ENCODE measurements at regions of chr3 and their contacts with region 1.

Region 1: DNA sequence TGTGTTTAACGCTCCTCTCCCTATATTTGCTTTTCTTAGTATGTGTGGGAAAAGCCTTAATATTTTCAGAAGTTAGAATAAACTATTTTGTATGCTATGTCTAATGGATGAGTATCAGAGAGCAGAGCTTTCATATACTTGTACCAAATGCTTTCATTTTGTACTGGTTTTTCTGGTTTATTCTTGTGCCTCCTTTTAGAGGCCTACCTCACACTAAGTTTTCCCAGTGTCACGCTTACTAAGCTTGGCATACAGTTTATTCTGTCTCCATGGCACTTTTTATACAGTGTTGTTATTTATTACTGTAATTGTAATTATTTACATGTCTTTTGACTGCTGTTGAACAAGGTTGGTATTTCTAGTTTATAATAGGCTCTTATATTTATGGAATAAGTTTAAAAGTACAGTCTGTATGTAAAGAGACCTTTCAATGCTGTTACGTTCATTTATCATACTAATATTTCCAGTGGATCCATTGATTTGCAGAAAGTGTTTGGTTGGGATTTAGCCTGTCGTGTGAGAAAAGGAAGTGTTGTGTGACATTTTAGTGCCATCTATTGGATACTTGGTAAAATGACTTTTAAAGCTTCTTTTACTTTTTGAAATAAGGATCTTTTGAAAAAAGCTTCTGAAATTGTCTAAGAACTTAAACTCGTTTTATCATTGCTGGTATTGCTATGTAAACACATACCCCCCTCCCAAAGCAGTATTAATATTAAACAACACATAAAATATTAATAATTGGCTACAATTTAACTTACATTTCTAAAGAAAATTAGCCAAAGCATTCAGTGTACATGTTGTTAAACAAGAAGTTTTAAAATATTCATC is 5.2 kb upstream of the EBLN2 start:
- DNase-seq: no peak
- H3K4me3 ChIP-seq: no peak overlapping the region
- H3K27ac ChIP-seq: no peak overlapping the region
- H3K4me1 ChIP-seq: peaks cover 23% of the 10 kb centered on the region
- H3K27me3 ChIP-seq: no peaks in the 10 kb centered on the region
- CTCF ChIP-seq: peak in 2 of 3 experiments; percentile 37 to 41
- POLR2A ChIP-seq: no peak

Region 2: GRCh38 chr3:72847751-72848702 is 208.2 kb before region 1 on chr3 and contains the start of gene SHQ1:
- intact Hi-C with region 1: loop called (anchors 10 kb)
- DNase-seq: peak in 1 of 2 donors; percentile 93
- H3K4me3 ChIP-seq: peak within 1 kb of the TSS; percentile 74 to 85
- H3K27ac ChIP-seq: peak within 1 kb of the TSS; percentile 70
- H3K4me1 ChIP-seq: peaks cover 21% of the 10 kb centered on the region
- H3K27me3 ChIP-seq: no peaks in the 10 kb centered on the region
- CTCF ChIP-seq: no peak
- POLR2A ChIP-seq: no peak
- total RNA-seq, gene SHQ1: 12.3 TPM

Region 3: DNA sequence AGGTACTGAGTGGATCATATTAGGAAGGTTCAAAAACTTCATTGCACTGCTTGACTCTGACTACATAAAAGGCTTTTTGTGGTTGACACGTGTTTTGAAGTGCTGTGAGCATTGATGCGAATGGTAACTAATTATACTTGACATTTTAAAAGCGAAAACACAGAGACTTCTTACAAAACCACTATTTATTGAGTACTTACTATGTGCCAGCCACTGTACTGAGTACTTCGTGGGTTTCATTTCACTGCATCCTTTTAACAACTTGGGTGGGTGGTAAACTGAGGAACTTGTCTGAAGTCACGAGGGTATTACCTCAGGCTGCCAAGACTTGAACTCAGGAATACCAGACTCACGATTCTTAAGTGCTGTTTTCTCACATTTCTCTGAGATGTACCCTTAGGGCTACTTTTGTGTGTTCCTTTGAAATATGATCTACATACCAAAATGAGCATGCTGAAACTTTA is 104.9 kb before region 1 on chr3:
- intact Hi-C with region 1: loop called (anchors 10 kb)
- DNase-seq: no peak
- H3K4me3 ChIP-seq: no peak overlapping the region
- H3K27ac ChIP-seq: no peak overlapping the region
- H3K4me1 ChIP-seq: no peaks in the 10 kb centered on the region
- H3K27me3 ChIP-seq: no peaks in the 10 kb centered on the region
- CTCF ChIP-seq: no peak
- POLR2A ChIP-seq: no peak